Panc1 (cell line): ENCODE measurements at regions of chr14 and their contacts with region 1.

Region 1: GRCh38 chr14:94795372-94795771 is 25.5 kb upstream of the GSC start:
- DNase-seq: no peak
- ATAC-seq: no peak
- H3K4me3 ChIP-seq: no peak overlapping the region
- H3K27ac ChIP-seq: no peak overlapping the region
- H3K4me1 ChIP-seq: no peaks in the 10 kb centered on the region
- H3K27me3 ChIP-seq: no peaks in the 10 kb centered on the region
- CTCF ChIP-seq: no peak

Region 2: GRCh38 chr14:94180655-94181271 is 614.6 kb before region 1 on chr14:
- CTCF ChIA-PET with region 1: interaction called, 10 read pairs
- POLR2A ChIA-PET with region 1: no interaction called
- in situ Hi-C with region 1: no loop called
- intact Hi-C with region 1: no loop called
- DNase-seq: no peak
- ATAC-seq: peak; percentile 63; the same call in 1 of the 2 replicates
- H3K4me3 ChIP-seq: peak overlapping the region in 1 of 2 experiments; percentile 1; a peak in 1 of 4 replicates
- H3K27ac ChIP-seq: no peak overlapping the region
- H3K4me1 ChIP-seq: no peaks in the 10 kb centered on the region; the same call in 1 of the 2 replicates
- H3K27me3 ChIP-seq: peaks cover 4% of the 10 kb centered on the region; the same call in 1 of the 2 replicates
- CTCF ChIP-seq: peak; percentile 66